Endothelial cell of umbilical vein (primary cell): ENCODE measurements at regions of chr2 and their contacts with region 1.

Region 1: GRCh38 chr2:176653479-176654443 is 384.5 kb downstream of the MTX2 start:
- DNase-seq: peak; percentile 86
- H3K4me3 ChIP-seq: no peak overlapping the region
- H3K27ac ChIP-seq: no peak overlapping the region
- H3K4me1 ChIP-seq: peaks cover 7% of the 10 kb centered on the region
- H3K27me3 ChIP-seq: peaks cover 0 to 8% of the 10 kb centered on the region in 2 experiments
- CTCF ChIP-seq: peak; percentile 69 to 76
- POLR2A ChIP-seq: no peak

Region 2: GRCh38 chr2:176001916-176002687 is 651.7 kb before region 1 on chr2 and contains the start of gene LNPK:
- CTCF ChIA-PET with region 1: no interaction called
- POLR2A ChIA-PET with region 1: no interaction called
- dilution Hi-C with region 1: no loop called
- intact Hi-C with region 1: loop called (anchors 5 kb)
- DNase-seq: peak; percentile 91
- H3K4me3 ChIP-seq: peak within 1 kb of the TSS; percentile 58 to 83 (median 79)
- H3K27ac ChIP-seq: peak within 1 kb of the TSS; percentile 10
- H3K4me1 ChIP-seq: peaks cover 17% of the 10 kb centered on the region
- H3K27me3 ChIP-seq: peaks cover 0 to 2% of the 10 kb centered on the region in 2 experiments
- CTCF ChIP-seq: no peak
- POLR2A ChIP-seq: peak; percentile 96
- total RNA-seq, gene LNPK: 11.2 and 11.8 TPM in 2 replicates

Region 3: DNA sequence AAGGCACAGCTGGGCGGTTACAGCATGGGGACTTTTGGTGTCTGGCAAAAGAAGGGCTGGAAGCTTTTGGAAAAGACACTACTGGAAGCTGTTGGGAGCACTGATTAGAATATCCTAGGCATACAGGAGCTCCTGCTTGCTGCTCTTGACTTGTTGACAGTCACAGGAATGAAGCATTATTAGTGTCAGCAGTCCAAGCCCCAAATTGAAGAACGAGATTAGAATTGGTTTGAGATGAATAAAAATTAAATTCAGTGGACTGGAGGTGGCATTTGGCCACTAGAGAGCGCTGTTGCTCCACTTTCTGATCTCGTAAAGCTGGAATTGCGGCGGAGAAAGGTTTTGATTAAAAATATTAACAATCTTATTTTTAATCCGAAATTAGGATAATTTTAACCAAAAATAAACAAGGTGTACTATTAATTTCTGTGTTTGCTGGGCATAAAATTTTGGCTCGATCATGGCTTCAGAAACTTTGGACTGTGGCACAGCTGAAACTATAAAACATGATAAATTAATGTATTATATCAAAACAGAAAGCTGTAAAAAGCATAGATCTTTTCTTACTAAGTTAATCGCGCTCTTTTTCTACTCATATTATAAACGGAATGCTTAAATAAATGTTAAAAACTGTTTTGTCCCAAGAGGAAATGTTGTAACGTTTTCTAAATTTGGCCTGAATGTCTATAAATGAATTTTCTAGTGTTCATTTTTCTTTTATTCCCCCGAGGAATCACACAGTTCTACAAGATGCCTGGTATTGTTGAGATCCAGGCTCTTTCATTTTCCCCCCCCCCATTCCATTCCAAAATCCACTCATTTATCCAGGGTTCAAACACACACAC is 526.6 kb before region 1 on chr2:
- CTCF ChIA-PET with region 1: interaction called, 458 read pairs
- POLR2A ChIA-PET with region 1: no interaction called
- dilution Hi-C with region 1: loop called (anchors 25 kb)
- intact Hi-C with region 1: loop called (anchors 1 kb)
- DNase-seq: peak; percentile 68
- H3K4me3 ChIP-seq: peak overlapping the region in 2 of 3 experiments; percentile 48 to 67
- H3K27ac ChIP-seq: no peak overlapping the region
- H3K4me1 ChIP-seq: peaks cover 33% of the 10 kb centered on the region
- H3K27me3 ChIP-seq: peaks cover 5 to 6% of the 10 kb centered on the region in 2 experiments
- CTCF ChIP-seq: peak; percentile 61 to 66
- POLR2A ChIP-seq: no peak

Region 4: DNA sequence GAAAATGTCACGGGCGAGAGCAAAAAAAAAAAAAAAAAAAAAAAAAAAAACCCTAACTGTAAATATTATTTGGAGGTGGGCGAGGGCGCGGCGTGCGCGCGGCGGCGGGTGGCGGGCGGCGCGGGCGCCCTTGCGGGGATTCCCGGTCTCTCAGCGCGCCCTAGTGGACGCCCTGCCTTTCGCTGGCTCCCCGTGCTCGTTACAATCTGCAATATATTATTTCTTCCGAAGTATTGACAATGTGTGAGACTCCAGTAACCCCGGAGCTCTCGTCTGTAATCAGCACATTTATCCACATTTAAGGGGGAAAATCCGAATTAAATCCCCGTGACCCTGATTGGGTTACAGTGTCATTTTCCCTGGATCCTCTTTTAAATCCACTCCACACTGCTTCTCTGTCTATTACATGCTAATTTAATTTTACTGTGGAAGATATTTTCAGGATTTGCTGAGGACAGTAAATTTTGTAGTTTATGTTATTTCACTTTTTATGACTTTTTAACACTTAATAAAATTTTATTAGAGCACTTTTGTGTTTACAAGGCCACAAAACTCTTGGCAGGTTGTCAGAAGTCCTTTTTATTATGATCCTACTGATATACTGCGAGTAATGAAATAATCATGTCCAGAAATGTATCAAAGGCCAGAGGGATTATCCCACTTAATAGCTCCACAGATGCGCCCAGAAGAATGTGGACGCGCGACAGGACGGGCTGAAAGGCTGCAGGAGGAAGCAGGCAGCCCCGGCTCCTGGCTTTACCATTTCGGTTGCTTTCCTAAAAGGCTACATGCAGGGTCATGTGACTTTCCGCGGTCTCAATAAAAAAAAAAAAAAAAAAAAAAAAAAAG is 15.4 kb before region 1 on chr2:
- CTCF ChIA-PET with region 1: interaction called, 42 read pairs
- POLR2A ChIA-PET with region 1: no interaction called
- dilution Hi-C with region 1: no loop called
- intact Hi-C with region 1: loop called (anchors 1 kb)
- DNase-seq: peak; percentile 74
- H3K4me3 ChIP-seq: peak overlapping the region; percentile 9 to 59 (median 55)
- H3K27ac ChIP-seq: peak overlapping the region; percentile 79
- H3K4me1 ChIP-seq: peaks cover 25% of the 10 kb centered on the region
- H3K27me3 ChIP-seq: no peaks in the 10 kb centered on the region
- CTCF ChIP-seq: peak; percentile 63 to 83
- POLR2A ChIP-seq: no peak

Region 5: GRCh38 chr2:176669398-176670174 is 15.8 kb after region 1 on chr2:
- CTCF ChIA-PET with region 1: interaction called, 19 read pairs
- POLR2A ChIA-PET with region 1: no interaction called
- dilution Hi-C with region 1: no loop called
- intact Hi-C with region 1: no loop called
- DNase-seq: peak; percentile 13
- H3K4me3 ChIP-seq: no peak overlapping the region
- H3K27ac ChIP-seq: no peak overlapping the region
- H3K4me1 ChIP-seq: no peaks in the 10 kb centered on the region
- H3K27me3 ChIP-seq: no peaks in the 10 kb centered on the region
- CTCF ChIP-seq: no peak
- POLR2A ChIP-seq: no peak

Region 6: DNA sequence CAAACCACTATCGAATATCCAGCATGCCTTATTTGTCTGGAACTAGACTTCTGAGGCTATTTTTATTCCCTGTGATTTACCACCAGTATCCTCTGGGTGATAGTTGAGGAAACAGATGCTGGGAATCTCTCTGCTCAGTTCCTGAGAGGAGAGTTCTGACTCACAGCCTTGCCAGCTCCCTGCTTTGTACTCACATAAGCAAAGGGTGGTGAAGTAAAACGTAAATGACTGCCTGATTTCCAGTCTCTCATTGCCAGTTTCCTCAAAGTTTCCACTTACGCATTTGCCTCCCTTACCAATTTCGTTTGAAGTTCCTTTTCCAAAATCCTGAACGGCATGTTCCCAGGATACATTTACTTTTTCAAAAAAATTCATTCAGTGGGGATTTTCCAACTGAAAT is 489.7 kb after region 1 on chr2:
- CTCF ChIA-PET with region 1: interaction called, 31 read pairs
- POLR2A ChIA-PET with region 1: no interaction called
- dilution Hi-C with region 1: loop called (anchors 25 kb)
- intact Hi-C with region 1: loop called (anchors 1 kb)
- DNase-seq: peak; percentile 93
- H3K4me3 ChIP-seq: no peak overlapping the region
- H3K27ac ChIP-seq: no peak overlapping the region
- H3K4me1 ChIP-seq: peaks cover 11% of the 10 kb centered on the region
- H3K27me3 ChIP-seq: peaks cover 9% of the 10 kb centered on the region in 2 experiments
- CTCF ChIP-seq: no peak
- POLR2A ChIP-seq: no peak